ENCODE measurements at regions of chr6 and their contacts with region 1.

Region 1: GRCh38 chr6:11232193-11232769 is at the start of gene NEDD9:
- DNase-seq: peak; percentile 89 to 92
- ATAC-seq: peak; percentile 95 to 97
- H3K4me3 ChIP-seq: peak within 1 kb of the TSS; percentile 61 to 91 (median 66)
- H3K27ac ChIP-seq: peak within 1 kb of the TSS; percentile 74 to 84 (median 75)
- H3K4me1 ChIP-seq: peaks cover 6 to 12% of the 10 kb centered on the region in 2 donors
- H3K27me3 ChIP-seq: no peaks in the 10 kb centered on the region
- CTCF ChIP-seq: no peak
- POLR2A ChIP-seq: peak; percentile 80 to 97
- total RNA-seq, gene NEDD9: 19.8 to 49.4 (median 35.6) TPM

Region 2: DNA sequence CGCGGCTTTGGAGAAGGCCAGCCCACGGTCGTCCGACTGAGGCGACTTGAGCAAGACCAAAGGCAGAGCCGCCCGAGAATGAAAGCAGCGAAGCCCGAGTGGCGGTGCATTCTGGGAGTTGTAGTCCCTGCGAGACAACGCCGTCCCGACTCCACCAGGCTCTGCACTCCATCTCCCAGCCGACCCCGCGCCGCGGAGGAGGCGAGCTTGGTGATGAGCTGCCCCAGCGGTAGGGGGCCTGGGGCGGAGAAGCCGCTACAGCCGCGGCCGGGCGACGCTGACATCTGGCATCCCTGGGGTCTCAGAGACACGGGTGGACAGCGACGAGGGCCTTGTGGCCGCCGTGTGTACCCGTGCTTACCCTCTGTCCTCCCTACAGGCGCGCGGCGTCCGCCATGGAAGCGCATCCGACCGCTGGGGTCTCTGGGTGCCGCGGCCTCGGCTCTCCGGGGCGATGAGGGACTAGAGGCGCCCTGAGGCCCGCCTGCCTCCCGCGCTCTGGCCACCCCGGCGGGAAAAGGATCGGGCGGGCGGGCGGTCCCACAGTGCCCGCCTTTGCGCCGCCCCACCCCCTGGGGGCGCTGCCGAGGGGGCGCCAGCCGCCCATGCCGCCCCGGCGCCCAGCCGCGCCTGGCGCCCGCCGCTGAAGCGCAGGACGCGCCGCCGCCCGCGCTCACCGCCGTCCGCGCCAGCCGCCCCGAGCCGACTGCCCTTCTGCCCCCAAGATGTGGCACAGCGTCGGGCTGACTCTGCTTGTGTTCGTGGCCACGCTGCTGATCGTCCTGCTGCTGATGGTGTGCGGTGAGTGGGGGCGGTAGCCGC is 138.5 kb before region 1 on chr6 and contains the start of gene SMIM13:
- in situ Hi-C with region 1: no loop called
- intact Hi-C with region 1: loop called (anchors 5 kb)
- DNase-seq: peak; percentile 97
- ATAC-seq: peak; percentile 94 to 98
- H3K4me3 ChIP-seq: peak within 1 kb of the TSS; percentile 78 to 91 (median 86)
- H3K27ac ChIP-seq: peak within 1 kb of the TSS; percentile 94 to 97 (median 95)
- H3K4me1 ChIP-seq: peaks cover 16 to 18% of the 10 kb centered on the region in 2 donors
- H3K27me3 ChIP-seq: no peaks in the 10 kb centered on the region
- CTCF ChIP-seq: peak; percentile 51 to 89 (median 70)
- POLR2A ChIP-seq: peak; percentile 71 to 81
- total RNA-seq, gene SMIM13: 9.9 to 12.8 (median 12.3) TPM

Region 3: GRCh38 chr6:11172501-11173332 is 59.6 kb before region 1 on chr6:
- in situ Hi-C with region 1: no loop called
- intact Hi-C with region 1: loop called (anchors 5 kb)
- DNase-seq: peak in 1 of 2 donors; percentile 11
- ATAC-seq: peak in 1 of 2 donors; percentile 50
- H3K4me3 ChIP-seq: no peak overlapping the region
- H3K27ac ChIP-seq: no peak overlapping the region
- H3K4me1 ChIP-seq: peaks cover 0 to 5% of the 10 kb centered on the region in 2 donors
- H3K27me3 ChIP-seq: no peaks in the 10 kb centered on the region
- CTCF ChIP-seq: peak; percentile 63 to 85 (median 76)
- POLR2A ChIP-seq: no peak

Region 4: DNA sequence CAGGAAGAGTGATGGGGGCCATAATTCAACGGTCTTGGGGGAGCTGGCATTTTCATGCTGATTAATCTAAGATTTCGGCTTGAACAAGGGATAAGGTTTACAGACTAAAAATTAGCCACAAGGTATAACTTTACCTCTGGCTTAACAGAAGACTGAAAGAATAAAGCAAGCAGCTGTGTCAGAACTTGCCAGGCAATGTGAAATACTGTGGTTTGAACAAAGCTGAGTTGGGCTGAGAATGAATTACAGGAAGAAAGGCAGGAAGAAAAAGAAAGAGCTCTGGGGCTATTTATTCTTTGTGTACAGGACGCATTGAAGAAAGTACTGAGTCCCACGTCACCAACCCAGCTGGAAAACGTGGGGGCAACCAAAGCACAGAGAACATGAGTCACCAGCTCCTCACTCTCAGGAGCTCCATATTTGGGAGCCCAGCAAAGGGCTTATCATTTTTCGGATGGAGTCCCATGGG is 121.7 kb after region 1 on chr6:
- in situ Hi-C with region 1: no loop called
- intact Hi-C with region 1: loop called (anchors 5 kb)
- DNase-seq: peak; percentile 24 to 54
- ATAC-seq: peak; percentile 72 to 81
- H3K4me3 ChIP-seq: no peak overlapping the region
- H3K27ac ChIP-seq: peak overlapping the region; percentile 74 to 84 (median 78)
- H3K4me1 ChIP-seq: peaks cover 9 to 14% of the 10 kb centered on the region in 2 donors
- H3K27me3 ChIP-seq: no peaks in the 10 kb centered on the region
- CTCF ChIP-seq: no peak
- POLR2A ChIP-seq: peak; percentile 35 to 62

Region 5: GRCh38 chr6:11434565-11435326 is 202.5 kb after region 1 on chr6:
- in situ Hi-C with region 1: no loop called
- intact Hi-C with region 1: loop called (anchors 5 kb)
- DNase-seq: peak in 1 of 2 donors; percentile 47
- ATAC-seq: peak; percentile 20 to 53
- H3K4me3 ChIP-seq: no peak overlapping the region
- H3K27ac ChIP-seq: peak overlapping the region in 3 of 4 donors; percentile 71 to 77 (median 76)
- H3K4me1 ChIP-seq: peaks cover 24 to 31% of the 10 kb centered on the region in 2 donors
- H3K27me3 ChIP-seq: no peaks in the 10 kb centered on the region
- CTCF ChIP-seq: no peak
- POLR2A ChIP-seq: no peak

Region 6: DNA sequence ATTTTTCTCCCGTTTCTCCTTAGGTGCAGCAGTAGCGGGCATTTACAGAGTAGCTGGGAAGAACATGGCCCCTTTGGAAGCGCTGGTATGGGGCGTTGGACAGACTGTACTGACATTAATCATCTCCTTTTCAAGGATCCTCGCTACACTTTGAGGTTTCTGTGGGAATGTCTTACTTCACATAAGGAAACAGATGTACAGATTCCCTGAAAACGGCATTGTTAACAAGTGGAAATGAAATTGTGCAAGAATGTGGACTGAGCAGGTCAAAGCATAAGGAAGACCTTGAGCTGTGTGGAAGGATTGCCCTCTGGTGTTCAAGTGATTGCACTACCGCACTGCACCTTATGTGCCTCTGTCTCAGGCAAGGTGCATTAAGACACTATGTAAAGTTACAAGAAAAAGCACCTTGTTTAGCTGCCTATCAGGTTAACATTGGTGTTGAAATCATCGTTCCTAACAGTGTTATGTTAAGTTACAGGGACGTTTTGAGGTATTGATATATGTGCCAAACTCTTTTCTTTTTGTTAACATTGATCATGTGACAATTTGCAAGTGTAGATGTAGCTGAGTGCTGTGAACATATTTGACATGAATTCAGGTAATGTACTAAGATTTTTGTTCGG is 343.2 kb after region 1 on chr6:
- in situ Hi-C with region 1: no loop called
- intact Hi-C with region 1: loop called (anchors 10 kb)
- DNase-seq: peak in 1 of 2 donors; percentile 51
- ATAC-seq: peak; percentile 96 to 99
- H3K4me3 ChIP-seq: no peak overlapping the region
- H3K27ac ChIP-seq: no peak overlapping the region
- H3K4me1 ChIP-seq: no peaks in the 10 kb centered on the region
- H3K27me3 ChIP-seq: no peaks in the 10 kb centered on the region
- CTCF ChIP-seq: peak; percentile 65 to 91 (median 77)
- POLR2A ChIP-seq: no peak